IMR-90 (cell line): ENCODE measurements at regions of chr12 and their contacts with region 1.

Region 1: GRCh38 chr12:69388371-69388770 is 28.8 kb downstream of the YEATS4 start:
- DNase-seq: peak; percentile 81
- ATAC-seq: peak; percentile 81
- H3K4me3 ChIP-seq: no peak overlapping the region
- H3K27ac ChIP-seq: no peak overlapping the region
- H3K4me1 ChIP-seq: no peaks in the 10 kb centered on the region; the same call in 1 of the 2 replicates
- H3K27me3 ChIP-seq: no peaks in the 10 kb centered on the region
- CTCF ChIP-seq: peak; percentile 88
- POLR2A ChIP-seq: no peak
- RAD21 ChIP-seq: peak; percentile 84

Region 2: GRCh38 chr12:68958322-68958721 is 430.0 kb before region 1 on chr12:
- CTCF ChIA-PET with region 1: no interaction called
- POLR2A ChIA-PET with region 1: no interaction called
- dilution Hi-C with region 1: no loop called
- in situ Hi-C with region 1: no loop called
- intact Hi-C with region 1: no loop called
- DNase-seq: no peak
- ATAC-seq: no peak
- H3K4me3 ChIP-seq: no peak overlapping the region
- H3K27ac ChIP-seq: no peak overlapping the region
- H3K4me1 ChIP-seq: peaks cover 20% of the 10 kb centered on the region
- H3K27me3 ChIP-seq: no peaks in the 10 kb centered on the region
- CTCF ChIP-seq: no peak
- POLR2A ChIP-seq: no peak
- RAD21 ChIP-seq: no peak

Region 3: DNA sequence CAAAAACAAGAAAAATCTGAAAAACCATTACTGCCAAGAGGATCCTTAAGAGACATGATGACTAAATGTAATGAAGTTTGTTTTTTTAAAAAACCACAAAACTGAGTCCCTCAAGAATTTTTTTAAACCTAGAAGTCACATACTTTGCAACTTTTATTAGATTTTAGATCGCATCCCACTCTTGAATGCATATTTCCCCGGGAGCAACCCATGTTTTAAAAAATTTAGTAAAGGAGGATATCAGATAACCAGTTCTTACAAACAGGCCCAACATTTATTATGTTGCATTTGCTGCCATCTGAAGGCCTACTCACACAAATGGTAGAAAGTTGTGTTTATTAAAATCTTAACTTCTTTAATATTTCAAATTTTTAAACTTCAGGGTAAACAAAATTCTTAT is 152.6 kb after region 1 on chr12:
- CTCF ChIA-PET with region 1: interaction called, 3 read pairs
- POLR2A ChIA-PET with region 1: no interaction called
- dilution Hi-C with region 1: no loop called
- in situ Hi-C with region 1: no loop called
- intact Hi-C with region 1: loop called (anchors 1 kb)
- DNase-seq: peak; percentile 84
- ATAC-seq: peak; percentile 95
- H3K4me3 ChIP-seq: no peak overlapping the region
- H3K27ac ChIP-seq: no peak overlapping the region
- H3K4me1 ChIP-seq: peaks cover 7% of the 10 kb centered on the region
- H3K27me3 ChIP-seq: no peaks in the 10 kb centered on the region
- CTCF ChIP-seq: peak; percentile 39
- POLR2A ChIP-seq: no peak
- RAD21 ChIP-seq: peak; percentile 46

Region 4: DNA sequence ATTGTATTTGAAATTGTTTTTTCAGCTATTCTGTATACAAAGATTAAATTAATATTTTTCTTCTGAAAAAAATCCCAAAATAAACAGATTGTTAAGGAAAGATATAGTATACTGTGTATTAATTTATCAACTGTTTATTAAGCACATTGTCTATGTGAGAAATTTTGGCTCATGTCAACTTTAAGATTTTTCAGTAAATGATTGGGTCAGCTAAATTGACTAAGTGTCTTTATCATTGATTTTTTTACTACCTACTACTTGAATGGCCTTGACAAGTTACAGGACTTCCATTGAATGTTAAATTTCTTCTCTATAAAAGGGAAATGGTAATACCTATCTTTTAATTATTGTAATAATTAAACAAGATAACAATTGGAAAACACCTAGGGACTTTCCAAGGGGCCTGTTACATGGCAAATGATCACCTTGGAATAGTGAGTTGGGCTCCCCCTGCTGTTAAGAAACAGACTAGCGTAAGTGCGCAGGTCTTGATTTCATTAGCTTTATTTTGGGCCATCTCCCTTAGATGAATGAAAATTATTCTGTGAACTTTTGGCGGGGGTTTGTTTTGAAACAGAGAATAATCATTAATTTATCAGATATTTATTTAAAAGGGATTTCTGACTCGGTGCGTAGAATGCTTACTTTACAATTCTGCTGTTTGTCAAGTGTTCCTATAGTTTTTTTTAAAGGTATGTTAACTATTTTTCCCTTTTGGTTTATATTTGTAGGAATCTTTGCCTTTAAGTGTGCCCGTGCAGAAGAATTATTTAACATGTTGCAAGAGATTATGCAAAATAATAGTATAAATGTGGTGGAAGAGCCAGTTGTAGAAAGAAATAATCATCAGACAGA is 182.4 kb after region 1 on chr12:
- CTCF ChIA-PET with region 1: interaction called, 7 read pairs
- POLR2A ChIA-PET with region 1: no interaction called
- dilution Hi-C with region 1: no loop called
- in situ Hi-C with region 1: loop called (anchors 5 kb)
- intact Hi-C with region 1: loop called (anchors 1 kb)
- DNase-seq: peak; percentile 69
- ATAC-seq: peak; percentile 74; the same call in 1 of the 2 replicates
- H3K4me3 ChIP-seq: no peak overlapping the region
- H3K27ac ChIP-seq: no peak overlapping the region
- H3K4me1 ChIP-seq: peaks cover 4% of the 10 kb centered on the region; the same call in 1 of the 2 replicates
- H3K27me3 ChIP-seq: no peaks in the 10 kb centered on the region
- CTCF ChIP-seq: peak; percentile 77
- POLR2A ChIP-seq: no peak
- RAD21 ChIP-seq: peak; percentile 82

Region 5: GRCh38 chr12:69585189-69586062 is 197.1 kb after region 1 on chr12 and contains the start of gene CCT2:
- CTCF ChIA-PET with region 1: no interaction called
- POLR2A ChIA-PET with region 1: no interaction called
- dilution Hi-C with region 1: no loop called
- in situ Hi-C with region 1: no loop called
- intact Hi-C with region 1: loop called (anchors 5 kb)
- DNase-seq: peak; percentile 94
- ATAC-seq: peak; percentile 97
- H3K4me3 ChIP-seq: peak within 1 kb of the TSS; percentile 52
- H3K27ac ChIP-seq: peak within 1 kb of the TSS; percentile 60
- H3K4me1 ChIP-seq: no peaks in the 10 kb centered on the region
- H3K27me3 ChIP-seq: no peaks in the 10 kb centered on the region
- CTCF ChIP-seq: peak; percentile 45
- POLR2A ChIP-seq: peak; percentile 96
- RAD21 ChIP-seq: peak; percentile 44
- total RNA-seq, gene CCT2: 565 and 651 TPM in 2 replicates